Right ventricle myocardium inferior (tissue), 1 donor: ENCODE measurements at regions of chr17 and their contacts with region 1.

Region 1: DNA sequence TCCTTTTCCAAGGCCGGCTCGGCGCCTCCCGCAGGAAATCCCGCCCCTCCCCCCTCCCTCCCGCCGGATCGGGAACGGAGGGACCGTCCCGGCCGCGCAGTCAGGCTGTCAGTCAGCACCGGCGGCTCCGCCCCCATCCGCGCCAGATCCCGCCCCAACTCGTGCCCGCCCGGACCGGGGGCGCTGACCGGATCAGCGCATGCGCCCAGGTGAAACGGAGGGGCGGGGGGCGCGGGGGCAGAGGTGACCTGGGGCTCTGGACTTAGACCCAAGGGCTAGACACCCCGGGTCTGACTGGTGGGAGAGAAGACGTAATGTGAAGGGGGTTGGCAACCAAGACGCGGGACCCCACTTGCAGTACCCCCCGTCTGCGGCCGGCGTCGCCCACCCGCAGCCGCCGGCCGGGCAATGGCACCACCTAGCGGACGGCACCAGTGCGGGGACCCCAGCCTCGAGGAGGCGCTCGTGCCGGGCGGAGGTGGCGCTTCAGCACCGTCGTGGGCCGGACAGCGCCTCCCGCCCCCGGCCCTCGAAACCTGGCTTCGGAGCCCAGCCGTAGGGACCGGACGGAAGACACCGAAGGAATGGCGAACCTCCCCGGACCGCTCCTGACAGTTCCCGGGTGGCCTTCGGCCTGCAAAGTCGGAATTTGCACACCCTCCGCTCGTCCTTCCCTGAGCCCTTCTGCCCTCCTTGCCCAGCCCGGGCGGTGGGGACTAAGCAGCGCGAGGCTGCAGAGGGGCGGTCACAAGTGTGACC is at the start of gene CASKIN2:
- DNase-seq: peak; percentile 96
- ATAC-seq: peak; percentile 94
- total RNA-seq, gene CASKIN2: 39.1 TPM

Region 2: GRCh38 chr17:75476271-75476671 is 39.4 kb before region 1 on chr17:
- intact Hi-C with region 1: loop called (anchors 5 kb)
- DNase-seq: no peak
- ATAC-seq: peak; percentile 56

Region 3: DNA sequence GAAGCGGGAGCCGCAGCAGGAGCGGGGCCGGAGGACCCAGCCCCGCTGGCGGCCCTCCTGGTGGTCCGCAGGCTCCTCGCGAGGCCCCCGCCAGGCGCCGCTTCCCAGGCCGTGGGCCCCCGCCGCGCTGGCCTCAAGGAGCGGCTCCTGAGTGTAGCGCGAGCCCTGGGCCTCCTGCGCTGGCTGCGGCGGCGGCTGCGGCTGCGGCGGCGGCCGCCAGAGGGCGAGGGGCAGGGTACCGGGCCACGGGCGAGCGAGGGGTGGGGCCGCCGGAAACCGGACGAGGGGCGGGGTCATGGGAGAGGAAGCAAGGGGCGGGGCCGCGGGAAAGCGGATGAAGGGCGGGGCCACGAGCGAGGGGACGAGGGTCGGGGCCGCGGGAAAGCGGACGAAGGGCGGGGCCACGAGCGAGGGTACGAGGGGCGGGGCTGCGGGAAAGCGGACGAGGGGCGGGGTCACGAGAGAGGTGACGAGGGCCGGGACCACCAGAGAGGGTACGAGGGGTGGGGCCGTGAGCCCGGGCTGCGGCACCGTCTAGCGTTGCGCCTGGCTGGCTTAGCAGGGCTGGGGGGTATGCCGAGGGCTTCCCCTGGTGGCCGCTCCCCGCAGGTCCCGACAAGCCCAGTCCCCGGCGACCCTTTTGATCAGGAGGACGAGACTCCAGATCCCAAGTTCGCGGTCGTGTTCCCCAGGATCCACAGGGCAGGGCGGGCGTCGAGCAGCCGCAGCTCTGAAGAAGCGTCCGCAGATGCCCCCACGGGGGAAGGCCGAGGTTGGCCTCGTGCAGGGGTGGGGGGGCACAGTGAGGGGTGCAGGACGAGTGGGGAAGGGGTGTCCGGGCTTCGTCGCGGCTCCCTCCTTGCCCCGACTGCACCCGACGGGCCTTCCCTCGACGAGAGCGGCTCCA is 73.6 kb after region 1 on chr17:
- intact Hi-C with region 1: loop called (anchors 5 kb)
- DNase-seq: peak; percentile 99
- ATAC-seq: peak; percentile 92